ENCODE measurements at regions of chr11 and their contacts with region 1.

Region 1: GRCh38 chr11:102451681-102452460 is 694 bp downstream of the TMEM123 start:
- DNase-seq: peak in 1 of 2 donors; percentile 73
- H3K4me3 ChIP-seq: peak overlapping the region; percentile 93 to 94
- H3K27ac ChIP-seq: peak overlapping the region; percentile 80 to 81
- H3K4me1 ChIP-seq: peaks cover 0 to 5% of the 10 kb centered on the region in 2 donors
- H3K27me3 ChIP-seq: no peaks in the 10 kb centered on the region
- CTCF ChIP-seq: peak in 1 of 3 experiments; percentile 28

Region 2: DNA sequence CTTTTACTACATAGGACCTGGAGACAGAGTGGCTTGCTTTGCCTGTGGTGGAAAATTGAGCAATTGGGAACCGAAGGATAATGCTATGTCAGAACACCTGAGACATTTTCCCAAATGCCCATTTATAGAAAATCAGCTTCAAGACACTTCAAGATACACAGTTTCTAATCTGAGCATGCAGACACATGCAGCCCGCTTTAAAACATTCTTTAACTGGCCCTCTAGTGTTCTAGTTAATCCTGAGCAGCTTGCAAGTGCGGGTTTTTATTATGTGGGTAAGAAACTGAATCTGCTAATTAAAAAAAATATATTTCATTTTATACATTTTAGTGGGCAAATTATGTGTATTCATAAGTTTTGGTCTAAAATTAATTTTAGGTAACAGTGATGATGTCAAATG is 126.8 kb before region 1 on chr11:
- intact Hi-C with region 1: no loop called
- DNase-seq: no peak
- H3K4me3 ChIP-seq: no peak overlapping the region
- H3K27ac ChIP-seq: no peak overlapping the region
- H3K4me1 ChIP-seq: peaks cover 0 to 7% of the 10 kb centered on the region in 2 donors
- H3K27me3 ChIP-seq: no peaks in the 10 kb centered on the region
- CTCF ChIP-seq: no peak

Region 3: DNA sequence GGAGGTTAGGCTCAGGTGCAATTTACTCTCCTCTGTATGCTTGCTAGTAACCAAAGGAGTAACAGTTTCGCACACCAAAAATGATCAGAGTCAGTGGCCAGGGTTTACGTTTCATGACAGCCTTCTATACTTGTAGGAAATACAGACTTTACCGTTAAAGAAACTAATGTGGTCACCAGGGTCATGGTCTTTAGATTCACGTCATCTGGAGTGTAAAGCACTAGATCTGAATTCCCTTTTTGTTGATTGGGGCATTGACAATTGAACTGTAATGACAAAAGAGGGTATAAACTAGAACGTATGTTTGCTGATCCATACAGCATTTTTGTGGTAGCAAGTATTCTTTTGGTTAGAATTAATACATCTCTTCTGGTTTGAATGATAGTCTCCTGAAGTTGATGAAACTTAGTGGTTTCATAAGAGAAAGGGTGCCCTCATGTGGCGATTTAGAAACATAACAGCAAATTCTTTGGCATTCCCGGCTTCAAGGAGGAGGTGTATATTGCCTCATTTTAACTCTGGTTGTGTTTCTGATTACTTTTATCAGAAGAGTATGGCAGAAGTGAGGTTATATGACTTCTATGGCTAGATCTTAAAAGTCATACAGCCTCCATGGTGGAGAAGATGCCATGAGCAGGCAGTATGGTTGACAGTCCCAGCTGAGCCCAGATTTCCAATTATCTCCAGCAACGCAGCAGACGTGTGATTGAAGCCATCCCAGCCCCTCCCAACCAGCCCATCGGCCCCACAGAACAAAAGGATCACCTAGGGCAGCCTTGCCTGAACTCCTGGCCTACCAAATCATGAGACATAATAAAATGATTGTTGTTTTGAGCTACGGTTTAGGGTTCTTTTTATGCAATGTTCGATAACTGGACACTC is 43.5 kb after region 1 on chr11:
- intact Hi-C with region 1: loop called (anchors 5 kb)
- DNase-seq: no peak
- H3K4me3 ChIP-seq: no peak overlapping the region
- H3K27ac ChIP-seq: no peak overlapping the region
- H3K4me1 ChIP-seq: no peaks in the 10 kb centered on the region
- H3K27me3 ChIP-seq: no peaks in the 10 kb centered on the region
- CTCF ChIP-seq: peak; percentile 38 to 66 (median 54)

Measured in ascending aorta (tissue), 2 donors.